MCF 10A (cell line): ENCODE measurements at regions of chr10 and their contacts with region 1.

Region 1: DNA sequence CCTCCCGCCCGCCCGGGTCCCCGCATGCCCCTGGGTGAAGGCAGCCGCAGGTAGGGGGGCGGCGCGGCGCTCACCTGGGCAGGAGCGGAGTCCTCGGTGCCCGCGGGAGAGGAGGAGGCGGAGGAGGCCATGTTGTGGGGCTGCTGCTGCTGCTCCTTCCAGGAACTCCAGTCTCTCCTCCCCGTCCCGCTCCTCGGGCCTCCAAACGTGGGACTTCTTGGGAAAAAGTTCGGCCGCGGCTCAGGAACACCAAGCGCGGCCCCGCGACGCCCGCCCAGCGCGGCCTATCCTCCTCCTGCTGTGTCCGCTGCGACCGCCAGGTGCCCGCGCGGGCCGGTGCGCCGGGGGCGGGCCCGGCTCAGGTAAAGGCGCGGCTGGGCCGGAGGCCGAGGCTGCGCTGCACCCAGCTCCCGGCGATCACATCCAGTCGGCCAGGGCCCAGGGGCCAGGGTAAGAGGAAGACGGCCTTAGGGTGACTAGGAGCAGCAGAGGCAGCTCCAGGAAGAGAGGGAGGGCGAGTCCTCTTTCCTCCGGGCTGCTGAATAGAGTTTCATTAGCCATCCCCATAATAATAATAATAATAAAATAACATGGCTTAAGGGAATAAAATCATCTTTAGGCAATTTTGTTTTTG is 45.0 kb upstream of the CDK1 start:
- DNase-seq: peak; percentile 70
- H3K4me3 Mint-ChIP-seq: peak overlapping the region; percentile 89
- H3K27ac Mint-ChIP-seq: peak overlapping the region; percentile 63
- H3K4me1 Mint-ChIP-seq: peaks cover 23% of the 10 kb centered on the region
- H3K27me3 Mint-ChIP-seq: no peaks in the 10 kb centered on the region
- CTCF ChIP-seq: peak; percentile 50

Region 2: GRCh38 chr10:60717852-60718251 is 15.5 kb before region 1 on chr10:
- CTCF ChIA-PET with region 1: interaction called, 3 read pairs
- POLR2A ChIA-PET with region 1: interaction called, 11 read pairs
- intact Hi-C with region 1: no loop called
- DNase-seq: no peak
- H3K4me3 Mint-ChIP-seq: no peak overlapping the region
- H3K27ac Mint-ChIP-seq: no peak overlapping the region
- H3K4me1 Mint-ChIP-seq: peaks cover 6% of the 10 kb centered on the region
- H3K27me3 Mint-ChIP-seq: no peaks in the 10 kb centered on the region
- CTCF ChIP-seq: no peak

Region 3: GRCh38 chr10:60760749-60761148 is 27.4 kb after region 1 on chr10:
- CTCF ChIA-PET with region 1: interaction called, 4 read pairs
- POLR2A ChIA-PET with region 1: interaction called, 10 read pairs
- intact Hi-C with region 1: no loop called
- DNase-seq: peak; percentile 20
- H3K4me3 Mint-ChIP-seq: no peak overlapping the region
- H3K27ac Mint-ChIP-seq: peak overlapping the region; percentile 35
- H3K4me1 Mint-ChIP-seq: peaks cover 13% of the 10 kb centered on the region
- H3K27me3 Mint-ChIP-seq: no peaks in the 10 kb centered on the region
- CTCF ChIP-seq: no peak

Region 4: GRCh38 chr10:60778214-60779029 is 45.1 kb after region 1 on chr10 and contains the start of gene CDK1:
- CTCF ChIA-PET with region 1: interaction called, 3 read pairs
- POLR2A ChIA-PET with region 1: interaction called, 14 read pairs
- intact Hi-C with region 1: no loop called
- DNase-seq: peak; percentile 99
- H3K4me3 Mint-ChIP-seq: peak within 1 kb of the TSS; percentile 96
- H3K27ac Mint-ChIP-seq: peak within 1 kb of the TSS; percentile 99
- H3K4me1 Mint-ChIP-seq: peaks cover 18% of the 10 kb centered on the region
- H3K27me3 Mint-ChIP-seq: no peaks in the 10 kb centered on the region
- CTCF ChIP-seq: no peak
- total RNA-seq, gene CDK1: 37.4 and 48.8 TPM in 2 replicates